ENCODE measurements at regions of chr3 and their contacts with region 1.

Region 1: GRCh38 chr3:43223670-43224364 is 62.5 kb upstream of the SNRK start:
- DNase-seq: no peak
- ATAC-seq: no peak
- H3K4me3 Mint-ChIP-seq: no peak overlapping the region
- H3K27ac Mint-ChIP-seq: no peak overlapping the region
- H3K4me1 Mint-ChIP-seq: peaks cover 8% of the 10 kb centered on the region
- H3K27me3 Mint-ChIP-seq: no peaks in the 10 kb centered on the region

Region 2: DNA sequence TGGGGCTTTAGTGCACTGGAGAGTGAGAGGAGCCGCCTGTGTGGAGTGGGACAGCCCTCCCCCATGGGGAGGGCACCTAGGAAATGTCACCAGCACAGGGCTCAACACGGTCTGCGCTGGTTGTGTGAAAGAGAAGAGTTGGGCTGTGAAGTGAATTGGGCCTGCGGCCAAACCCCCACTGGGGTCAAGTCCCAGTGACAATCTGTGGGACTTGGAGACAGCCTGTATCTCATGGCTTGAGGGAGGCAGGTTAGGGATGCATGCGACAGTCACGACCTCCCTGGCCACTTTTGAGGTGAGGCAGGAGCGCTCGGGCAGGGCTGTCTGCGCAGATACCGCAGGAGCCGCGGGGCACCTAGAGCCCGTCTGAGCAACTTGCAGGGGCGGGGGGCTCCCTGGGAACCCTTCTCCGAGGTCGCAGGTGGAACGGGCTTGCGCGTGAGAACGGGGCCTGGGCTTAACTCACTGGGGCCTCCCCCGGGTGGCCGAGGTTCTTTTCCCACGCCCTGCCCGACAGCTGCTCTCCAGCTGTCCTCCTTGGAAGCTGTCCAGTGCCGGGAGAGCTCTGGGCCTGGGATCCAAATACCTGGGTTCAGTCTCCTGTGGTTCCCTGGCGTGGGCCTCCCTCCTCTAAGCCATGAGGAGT is 139.9 kb after region 1 on chr3:
- CTCF ChIA-PET with region 1: no interaction called
- DNase-seq: peak; percentile 31
- ATAC-seq: no peak
- H3K4me3 Mint-ChIP-seq: no peak overlapping the region
- H3K27ac Mint-ChIP-seq: no peak overlapping the region
- H3K4me1 Mint-ChIP-seq: no peaks in the 10 kb centered on the region
- H3K27me3 Mint-ChIP-seq: no peaks in the 10 kb centered on the region

Region 3: GRCh38 chr3:43503067-43503728 is 279.4 kb after region 1 on chr3:
- CTCF ChIA-PET with region 1: interaction called, 11 read pairs
- DNase-seq: no peak
- ATAC-seq: no peak
- H3K4me3 Mint-ChIP-seq: no peak overlapping the region
- H3K27ac Mint-ChIP-seq: no peak overlapping the region
- H3K4me1 Mint-ChIP-seq: peaks cover 24% of the 10 kb centered on the region
- H3K27me3 Mint-ChIP-seq: no peaks in the 10 kb centered on the region

Region 4: GRCh38 chr3:43838877-43839276 is 615.1 kb after region 1 on chr3:
- CTCF ChIA-PET with region 1: no interaction called
- DNase-seq: no peak
- ATAC-seq: no peak
- H3K4me3 Mint-ChIP-seq: no peak overlapping the region
- H3K27ac Mint-ChIP-seq: no peak overlapping the region
- H3K4me1 Mint-ChIP-seq: no peaks in the 10 kb centered on the region
- H3K27me3 Mint-ChIP-seq: peaks cover 10% of the 10 kb centered on the region

Measured in activated CD8-positive, alpha-beta memory T cell treated with anti-CD3 and anti-CD28 coated beads, Interleukin-2, amount 10 ng/mL, durations not matched to agents 7 days and 5 days (primary cell).